SK-N-SH (cell line): ENCODE measurements at regions of chr6 and their contacts with region 1.

Region 1: GRCh38 chr6:166402582-166403277 is 20.0 kb upstream of the MPC1 start:
- DNase-seq: peak; percentile 80
- H3K4me3 ChIP-seq: no peak overlapping the region
- H3K27ac ChIP-seq: peak overlapping the region; percentile 25 to 87; a peak in 2 of 4 replicates
- H3K4me1 ChIP-seq: peaks cover 0 to 21% of the 10 kb centered on the region in 2 experiments; a peak in 2 of 4 replicates
- H3K27me3 ChIP-seq: no peaks in the 10 kb centered on the region
- CTCF ChIP-seq: no peak
- EP300 ChIP-seq: peak in 1 of 2 experiments; percentile 40; a peak in 1 of 4 replicates
- RAD21 ChIP-seq: no peak

Region 2: GRCh38 chr6:166156942-166157341 is 245.8 kb before region 1 on chr6:
- CTCF ChIA-PET with region 1: interaction called, 13 read pairs
- POLR2A ChIA-PET with region 1: no interaction called
- DNase-seq: no peak
- H3K4me3 ChIP-seq: no peak overlapping the region
- H3K27ac ChIP-seq: no peak overlapping the region
- H3K4me1 ChIP-seq: no peaks in the 10 kb centered on the region
- H3K27me3 ChIP-seq: no peaks in the 10 kb centered on the region; the same call in 1 of the 2 replicates
- CTCF ChIP-seq: peak; percentile 38
- EP300 ChIP-seq: no peak
- RAD21 ChIP-seq: peak; percentile 65

Region 3: DNA sequence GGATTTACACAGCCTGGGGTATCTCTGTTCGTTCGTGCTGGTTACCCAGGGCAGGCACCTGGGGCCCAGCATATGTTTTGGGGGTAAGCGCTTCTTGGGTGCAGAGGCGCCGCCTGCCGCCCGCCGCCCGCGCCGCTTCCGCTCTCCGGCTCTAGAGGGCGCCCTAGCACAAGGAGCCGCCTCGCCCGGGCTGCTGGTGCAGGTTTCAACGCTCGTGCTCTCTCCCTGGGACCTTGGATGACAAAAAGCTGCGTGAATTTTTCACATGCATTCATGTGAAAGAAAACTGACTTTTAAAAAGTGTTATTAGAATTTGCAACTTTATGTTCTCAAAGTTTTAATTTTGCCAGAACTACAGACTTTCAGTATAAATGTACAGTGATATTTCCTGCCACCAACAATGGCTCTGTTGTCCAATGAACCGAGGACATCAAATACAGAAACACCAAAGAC is 127.0 kb before region 1 on chr6:
- CTCF ChIA-PET with region 1: interaction called, 42 read pairs
- POLR2A ChIA-PET with region 1: no interaction called
- DNase-seq: peak; percentile 88
- H3K4me3 ChIP-seq: no peak overlapping the region; a peak in 1 of 4 replicates
- H3K27ac ChIP-seq: no peak overlapping the region
- H3K4me1 ChIP-seq: no peaks in the 10 kb centered on the region; a peak in 1 of 4 replicates
- H3K27me3 ChIP-seq: peaks cover 14% of the 10 kb centered on the region; the same call in 1 of the 2 replicates
- CTCF ChIP-seq: peak; percentile 98
- EP300 ChIP-seq: no peak
- RAD21 ChIP-seq: peak; percentile 92

Region 4: GRCh38 chr6:166313255-166314070 is 89.3 kb before region 1 on chr6:
- CTCF ChIA-PET with region 1: interaction called, 19 read pairs
- POLR2A ChIA-PET with region 1: no interaction called
- DNase-seq: peak; percentile 74
- H3K4me3 ChIP-seq: no peak overlapping the region; a peak in 1 of 4 replicates
- H3K27ac ChIP-seq: no peak overlapping the region
- H3K4me1 ChIP-seq: peaks cover 0 to 3% of the 10 kb centered on the region in 2 experiments; a peak in 1 of 4 replicates
- H3K27me3 ChIP-seq: peaks cover 10% of the 10 kb centered on the region
- CTCF ChIP-seq: peak; percentile 56
- EP300 ChIP-seq: no peak
- RAD21 ChIP-seq: peak; percentile 58

Region 5: DNA sequence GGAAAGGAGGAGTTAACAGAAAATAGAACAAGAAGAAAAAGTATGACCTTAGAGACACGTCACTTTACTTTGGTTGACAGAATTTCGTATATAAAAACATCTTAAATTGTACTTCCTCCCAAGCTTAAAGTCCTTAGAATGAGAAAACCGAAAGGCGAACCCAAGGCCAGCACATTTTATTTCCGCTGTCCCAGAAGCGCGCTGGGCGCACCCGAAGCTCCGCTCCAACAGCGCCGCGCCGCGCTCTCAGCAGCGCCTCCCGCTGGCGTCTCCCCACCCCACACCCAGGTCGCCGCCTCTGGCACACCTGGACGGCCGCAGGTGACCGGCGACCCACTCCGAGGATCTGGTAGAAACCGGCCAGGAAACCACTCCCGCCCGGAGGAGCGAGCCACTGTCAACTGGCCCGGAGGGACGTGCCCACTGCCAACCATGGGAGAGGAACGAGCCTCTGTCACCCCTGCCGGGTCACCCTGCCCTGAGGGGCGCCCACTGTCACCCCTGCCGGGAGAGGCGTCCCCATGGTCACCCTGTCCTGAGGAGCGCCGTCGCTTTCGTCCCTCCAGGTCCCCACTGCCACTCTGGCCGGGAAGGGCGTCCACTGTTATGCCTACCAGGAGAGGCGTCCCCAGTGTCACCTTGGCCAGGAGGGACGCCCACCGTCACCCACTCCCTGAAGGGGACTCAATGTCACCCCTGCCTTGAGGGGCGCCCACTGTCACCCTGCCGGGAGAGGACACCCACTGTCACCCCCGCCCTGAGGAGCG is 20.8 kb before region 1 on chr6:
- CTCF ChIA-PET with region 1: interaction called, 32 read pairs
- POLR2A ChIA-PET with region 1: no interaction called
- DNase-seq: peak; percentile 78
- H3K4me3 ChIP-seq: peak overlapping the region; percentile 91 to 96
- H3K27ac ChIP-seq: peak overlapping the region in 1 of 2 experiments; percentile 58; a peak in 2 of 4 replicates
- H3K4me1 ChIP-seq: peaks cover 0 to 2% of the 10 kb centered on the region in 2 experiments; a peak in 1 of 4 replicates
- H3K27me3 ChIP-seq: no peaks in the 10 kb centered on the region
- CTCF ChIP-seq: peak; percentile 79
- EP300 ChIP-seq: no peak
- RAD21 ChIP-seq: peak; percentile 54

Region 6: DNA sequence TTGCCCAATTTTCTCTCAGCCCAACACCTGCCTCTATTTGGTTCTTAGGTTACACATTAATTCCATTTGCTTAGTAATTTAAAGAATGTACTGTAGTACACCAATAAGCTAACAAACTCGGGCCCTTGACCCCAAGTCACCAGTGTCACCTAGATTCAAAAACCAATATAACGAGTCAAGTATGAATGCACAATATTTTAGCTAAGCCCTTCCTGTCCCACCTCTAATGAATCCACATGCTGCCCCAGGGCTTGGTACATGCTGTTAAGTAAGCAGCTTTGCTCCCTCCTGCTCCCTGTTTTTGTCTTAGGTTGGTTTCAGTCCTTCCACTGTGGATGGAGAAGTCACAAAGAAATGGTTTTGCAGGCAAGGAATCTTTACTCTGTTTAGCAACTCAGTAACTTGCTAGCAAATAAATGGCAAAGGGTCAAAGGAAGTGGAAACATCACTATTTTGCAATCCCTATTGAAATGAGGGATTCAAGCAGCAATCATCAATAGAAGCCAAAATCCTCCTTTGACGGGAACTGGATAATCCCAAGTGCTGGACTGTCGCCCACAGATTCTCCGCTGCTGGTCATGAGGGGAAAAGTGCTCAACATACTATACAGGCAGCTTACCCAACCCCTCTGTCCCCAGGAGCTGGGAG is 15.0 kb before region 1 on chr6:
- CTCF ChIA-PET with region 1: interaction called, 15 read pairs
- POLR2A ChIA-PET with region 1: no interaction called
- DNase-seq: no peak
- H3K4me3 ChIP-seq: no peak overlapping the region
- H3K27ac ChIP-seq: no peak overlapping the region
- H3K4me1 ChIP-seq: no peaks in the 10 kb centered on the region
- H3K27me3 ChIP-seq: no peaks in the 10 kb centered on the region
- CTCF ChIP-seq: no peak
- EP300 ChIP-seq: no peak
- RAD21 ChIP-seq: no peak

Region 7: DNA sequence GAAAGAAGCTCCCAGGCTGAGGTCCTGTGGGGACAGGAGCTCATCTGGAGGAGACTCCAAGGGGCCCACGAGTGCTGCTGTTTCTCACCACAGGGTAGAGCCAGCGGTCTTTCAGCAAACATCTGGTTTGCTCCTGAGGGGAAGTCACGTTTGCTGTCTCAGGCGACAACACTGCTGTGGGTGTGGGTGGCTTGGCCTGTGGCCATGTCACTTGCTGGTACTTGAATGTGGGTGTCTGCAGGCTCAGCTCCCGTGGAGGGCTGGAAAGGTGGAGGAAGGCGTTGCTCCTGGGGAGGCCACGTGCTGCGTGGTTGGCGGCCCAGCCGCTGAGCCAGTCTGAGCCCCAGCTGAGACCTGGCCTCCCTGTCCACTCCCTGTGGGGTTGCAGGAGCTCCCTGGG is 32.8 kb after region 1 on chr6:
- CTCF ChIA-PET with region 1: interaction called, 11 read pairs
- POLR2A ChIA-PET with region 1: interaction called, 5 read pairs
- DNase-seq: peak; percentile 71
- H3K4me3 ChIP-seq: no peak overlapping the region
- H3K27ac ChIP-seq: peak overlapping the region in 1 of 2 experiments; percentile 80; a peak in 2 of 4 replicates
- H3K4me1 ChIP-seq: peaks cover 0 to 42% of the 10 kb centered on the region in 2 experiments; a peak in 2 of 4 replicates
- H3K27me3 ChIP-seq: no peaks in the 10 kb centered on the region
- CTCF ChIP-seq: no peak
- EP300 ChIP-seq: peak in 1 of 2 experiments; percentile 30; a peak in 1 of 4 replicates
- RAD21 ChIP-seq: peak; percentile 72